Posterior vena cava (tissue), 2 donors: ENCODE measurements at regions of chr4 and their contacts with region 1.

Region 1: DNA sequence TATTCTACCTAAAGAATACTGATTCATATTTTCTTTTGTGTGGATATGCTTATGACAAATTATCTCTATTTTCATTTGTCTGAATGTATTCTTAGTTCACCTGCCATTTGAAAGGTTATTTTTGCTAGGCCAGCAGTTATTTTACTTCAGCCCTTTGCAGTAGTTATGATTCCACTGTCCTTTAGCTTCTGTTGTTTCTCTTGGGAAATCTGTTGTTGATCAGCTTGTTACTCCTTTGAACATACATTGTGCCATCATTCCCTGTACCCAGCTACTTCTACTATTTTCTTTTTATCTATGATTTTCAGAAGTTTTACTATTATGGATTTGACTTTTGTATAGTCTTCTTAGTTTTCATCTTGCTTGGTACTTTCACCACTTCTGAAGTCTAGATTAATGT is 37.2 kb downstream of the RBM46 start:
- DNase-seq: no peak

Region 2: DNA sequence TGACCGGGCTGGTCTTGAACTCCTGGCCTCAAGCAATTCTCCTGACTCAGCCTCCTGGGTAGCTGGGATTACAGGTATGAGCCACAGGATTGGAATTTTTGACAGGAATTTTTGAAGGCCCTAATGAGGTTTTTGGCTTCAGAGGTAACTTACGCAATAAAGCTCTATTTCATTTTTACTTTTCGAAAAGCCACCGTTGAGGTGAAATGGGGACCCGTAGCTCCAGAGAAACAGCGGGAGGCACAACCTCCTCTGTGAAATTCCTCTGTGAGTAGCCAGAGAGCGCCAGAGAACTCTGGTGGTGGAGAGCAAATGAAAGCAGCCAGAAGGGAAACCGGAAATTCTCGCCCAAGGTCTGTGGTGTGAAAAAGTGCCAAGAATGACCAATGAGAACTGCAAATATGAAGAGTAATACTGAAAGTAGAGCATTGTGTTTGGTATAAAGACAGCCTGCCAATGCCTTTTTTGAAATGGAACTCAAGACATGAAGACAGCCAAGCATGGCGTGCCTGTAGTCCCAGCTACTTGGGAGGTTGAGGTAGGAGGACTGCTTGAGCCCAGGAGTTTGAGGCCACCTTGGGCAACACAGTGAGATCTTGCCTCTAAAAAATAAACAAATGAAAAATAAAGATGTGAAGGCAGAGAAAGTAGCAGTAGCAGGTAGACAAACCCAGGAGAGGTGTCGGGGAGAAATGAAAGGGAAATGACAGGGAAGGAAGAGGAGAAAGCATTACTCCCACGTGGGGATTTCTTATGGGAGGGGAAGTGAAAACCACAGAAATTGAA is 1385.1 kb before region 1 on chr4:
- intact Hi-C with region 1: no loop called
- DNase-seq: no peak

Region 3: DNA sequence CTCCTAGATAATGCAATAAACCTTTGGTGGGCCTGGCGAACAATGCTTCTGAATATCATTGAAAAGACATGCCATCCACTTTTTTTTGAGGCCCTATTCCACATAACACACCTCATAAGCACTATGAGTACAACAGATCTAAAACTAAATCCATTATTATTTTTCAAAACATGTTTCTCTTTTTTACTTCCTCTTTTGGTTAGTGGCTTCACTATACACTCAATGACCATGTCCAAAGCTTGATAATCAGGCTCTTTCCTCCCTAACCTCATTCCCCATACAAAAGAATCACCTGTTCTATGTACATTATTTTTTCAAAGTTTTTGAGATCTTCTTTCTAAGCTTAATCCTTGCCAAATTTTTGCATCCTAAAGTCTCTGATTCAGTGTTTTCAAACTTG is 369.8 kb after region 1 on chr4:
- intact Hi-C with region 1: loop called in 1 of 2 experiments (anchors 5 kb)
- DNase-seq: no peak